Dendritic cell treated with granulocyte-macrophage colony-stimulating factor and Interleukin-4, amounts not matched to agents 40 ng/mL and 50 ng/mL, for 4 days (primary cell): ENCODE measurements at regions of chrX and their contacts with region 1.

Region 1: DNA sequence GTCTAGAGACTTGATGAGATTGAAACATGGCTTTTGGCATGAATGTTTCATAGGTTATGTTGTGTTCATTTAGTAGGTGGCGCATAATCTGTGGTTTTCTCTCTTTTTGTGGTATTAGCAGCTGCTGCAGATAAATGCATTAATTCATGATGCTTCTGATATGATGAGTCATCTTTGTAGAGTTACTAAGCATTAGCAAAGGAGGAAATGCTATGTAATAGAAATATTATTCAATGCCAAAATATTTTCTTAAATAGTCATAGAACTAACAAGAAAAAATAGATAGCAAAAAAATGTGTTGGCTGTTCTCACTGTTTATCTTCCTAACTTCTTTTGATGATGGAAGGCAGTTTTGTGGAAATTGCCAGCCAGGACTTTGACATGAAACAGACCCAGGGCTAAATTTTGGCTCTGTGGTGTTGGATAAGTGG is 3.6 kb downstream of the ZXDB start:
- H3K4me3 Mint-ChIP-seq: no peak overlapping the region
- H3K27ac Mint-ChIP-seq: no peak overlapping the region
- H3K4me1 Mint-ChIP-seq: peaks cover 26% of the 10 kb centered on the region
- H3K27me3 Mint-ChIP-seq: no peaks in the 10 kb centered on the region

Region 2: GRCh38 chrX:57353472-57354132 is 241.8 kb before region 1 on chrX:
- intact Hi-C with region 1: no loop called
- H3K4me3 Mint-ChIP-seq: no peak overlapping the region
- H3K27ac Mint-ChIP-seq: no peak overlapping the region
- H3K4me1 Mint-ChIP-seq: no peaks in the 10 kb centered on the region
- H3K27me3 Mint-ChIP-seq: no peaks in the 10 kb centered on the region

Region 3: GRCh38 chrX:57453901-57454300 is 141.5 kb before region 1 on chrX:
- intact Hi-C with region 1: no loop called
- H3K4me3 Mint-ChIP-seq: no peak overlapping the region
- H3K27ac Mint-ChIP-seq: no peak overlapping the region
- H3K4me1 Mint-ChIP-seq: no peaks in the 10 kb centered on the region
- H3K27me3 Mint-ChIP-seq: no peaks in the 10 kb centered on the region

Region 4: DNA sequence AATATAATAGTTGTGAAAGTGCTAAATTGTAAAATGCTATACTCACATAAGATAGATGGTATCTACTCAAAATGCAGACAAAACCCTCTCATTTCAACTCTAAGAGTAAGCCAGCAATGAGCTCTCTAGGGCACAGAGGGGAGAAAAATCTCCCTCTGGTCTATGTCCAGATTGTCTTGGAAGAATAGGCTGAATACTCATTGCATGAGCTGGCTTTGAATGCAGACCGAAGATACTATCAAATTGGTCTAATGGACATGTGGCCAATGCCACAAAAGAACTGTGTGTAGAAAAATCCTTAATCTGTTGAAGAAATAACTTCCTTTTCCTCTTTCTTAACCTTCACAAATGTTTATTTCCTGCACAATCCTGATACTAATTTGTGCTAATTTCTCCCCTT is 311.4 kb after region 1 on chrX:
- intact Hi-C with region 1: loop called (anchors 5 kb)
- H3K4me3 Mint-ChIP-seq: no peak overlapping the region
- H3K27ac Mint-ChIP-seq: no peak overlapping the region
- H3K4me1 Mint-ChIP-seq: peaks cover 13% of the 10 kb centered on the region
- H3K27me3 Mint-ChIP-seq: no peaks in the 10 kb centered on the region